ENCODE measurements at regions of chr5 and their contacts with region 1.

Region 1: GRCh38 chr5:94849821-94850736 is 231.6 kb downstream of the SLF1 start:
- DNase-seq: no peak
- H3K4me3 ChIP-seq: no peak overlapping the region
- H3K27ac ChIP-seq: no peak overlapping the region
- H3K4me1 ChIP-seq: no peaks in the 10 kb centered on the region
- H3K27me3 ChIP-seq: no peaks in the 10 kb centered on the region
- CTCF ChIP-seq: peak in 1 of 3 donors; percentile 8
- EP300 ChIP-seq: no peak
- POLR2A ChIP-seq: no peak

Region 2: GRCh38 chr5:93117751-93118531 is 1732.1 kb before region 1 on chr5:
- intact Hi-C with region 1: loop called in 1 of 4 experiments (anchors 5 kb)
- DNase-seq: no peak
- H3K4me3 ChIP-seq: no peak overlapping the region
- H3K27ac ChIP-seq: no peak overlapping the region
- H3K4me1 ChIP-seq: peaks cover 2% of the 10 kb centered on the region
- H3K27me3 ChIP-seq: no peaks in the 10 kb centered on the region
- CTCF ChIP-seq: no peak
- EP300 ChIP-seq: no peak
- POLR2A ChIP-seq: no peak

Region 3: DNA sequence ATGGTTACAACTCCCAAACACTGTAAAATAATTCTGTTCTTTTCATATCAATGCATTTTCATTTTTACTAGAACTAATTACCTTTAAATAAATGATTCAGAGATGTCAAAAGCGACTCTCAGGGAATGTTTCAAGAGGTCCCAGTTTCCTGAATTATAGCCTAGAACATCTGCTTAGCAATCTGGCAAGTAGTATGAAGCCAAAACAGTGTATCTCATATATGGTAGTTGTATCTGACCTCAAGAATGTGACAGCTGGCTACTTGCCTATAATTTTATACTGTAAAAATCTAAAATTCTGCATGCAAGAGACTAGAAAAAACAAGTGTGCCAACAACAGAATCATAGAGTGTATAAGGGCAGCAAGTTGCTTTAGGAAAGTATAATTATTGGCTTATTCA is 920.9 kb before region 1 on chr5:
- intact Hi-C with region 1: no loop called
- DNase-seq: no peak
- H3K4me3 ChIP-seq: no peak overlapping the region
- H3K27ac ChIP-seq: no peak overlapping the region
- H3K4me1 ChIP-seq: no peaks in the 10 kb centered on the region
- H3K27me3 ChIP-seq: no peaks in the 10 kb centered on the region
- CTCF ChIP-seq: no peak
- EP300 ChIP-seq: no peak
- POLR2A ChIP-seq: no peak

Measured in ovary (tissue), 10 donors.